Activated naive CD4-positive, alpha-beta T cell treated with anti-CD3 and anti-CD28 coated beads for 36 hours (primary cell): ENCODE measurements at regions of chr16 and their contacts with region 1.

Region 1: GRCh38 chr16:65117811-65118448 is 3.9 kb downstream of the CDH11 start:
- DNase-seq: peak; percentile 68
- H3K4me3 Mint-ChIP-seq: no peak overlapping the region
- H3K27ac Mint-ChIP-seq: no peak overlapping the region
- H3K4me1 Mint-ChIP-seq: peaks cover 2% of the 10 kb centered on the region
- H3K27me3 Mint-ChIP-seq: peaks cover 33% of the 10 kb centered on the region

Region 2: DNA sequence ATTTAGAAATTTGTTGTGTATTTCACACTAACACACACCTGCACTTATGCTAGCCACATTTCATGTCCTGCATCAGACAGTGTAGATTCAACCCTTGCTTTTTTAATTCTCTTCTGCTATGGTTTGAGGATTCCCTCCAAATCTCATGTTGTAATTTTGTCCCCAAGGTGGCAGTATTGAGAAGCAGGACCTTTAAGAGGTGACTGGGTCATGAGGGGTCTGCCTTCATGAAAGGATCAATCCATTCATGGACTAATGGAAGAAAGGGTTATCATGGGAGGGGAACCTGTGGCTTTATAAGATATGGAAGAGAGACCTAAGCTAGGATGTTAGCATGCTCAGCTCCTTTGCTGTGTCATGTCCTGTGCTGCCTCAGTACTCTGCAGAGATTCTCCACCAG is 1028.2 kb before region 1 on chr16:
- CTCF ChIA-PET with region 1: no interaction called
- intact Hi-C with region 1: loop called (anchors 5 kb)
- DNase-seq: no peak
- H3K4me3 Mint-ChIP-seq: no peak overlapping the region
- H3K27ac Mint-ChIP-seq: no peak overlapping the region
- H3K4me1 Mint-ChIP-seq: no peaks in the 10 kb centered on the region
- H3K27me3 Mint-ChIP-seq: no peaks in the 10 kb centered on the region

Region 3: GRCh38 chr16:65172356-65172755 is 54.4 kb after region 1 on chr16:
- CTCF ChIA-PET with region 1: no interaction called
- intact Hi-C with region 1: no loop called
- DNase-seq: no peak
- H3K4me3 Mint-ChIP-seq: no peak overlapping the region
- H3K27ac Mint-ChIP-seq: no peak overlapping the region
- H3K4me1 Mint-ChIP-seq: no peaks in the 10 kb centered on the region
- H3K27me3 Mint-ChIP-seq: no peaks in the 10 kb centered on the region

Region 4: GRCh38 chr16:65323655-65324237 is 205.8 kb after region 1 on chr16:
- CTCF ChIA-PET with region 1: no interaction called
- intact Hi-C with region 1: loop called (anchors 10 kb)
- DNase-seq: no peak
- H3K4me3 Mint-ChIP-seq: no peak overlapping the region
- H3K27ac Mint-ChIP-seq: no peak overlapping the region
- H3K4me1 Mint-ChIP-seq: no peaks in the 10 kb centered on the region
- H3K27me3 Mint-ChIP-seq: no peaks in the 10 kb centered on the region

Region 5: DNA sequence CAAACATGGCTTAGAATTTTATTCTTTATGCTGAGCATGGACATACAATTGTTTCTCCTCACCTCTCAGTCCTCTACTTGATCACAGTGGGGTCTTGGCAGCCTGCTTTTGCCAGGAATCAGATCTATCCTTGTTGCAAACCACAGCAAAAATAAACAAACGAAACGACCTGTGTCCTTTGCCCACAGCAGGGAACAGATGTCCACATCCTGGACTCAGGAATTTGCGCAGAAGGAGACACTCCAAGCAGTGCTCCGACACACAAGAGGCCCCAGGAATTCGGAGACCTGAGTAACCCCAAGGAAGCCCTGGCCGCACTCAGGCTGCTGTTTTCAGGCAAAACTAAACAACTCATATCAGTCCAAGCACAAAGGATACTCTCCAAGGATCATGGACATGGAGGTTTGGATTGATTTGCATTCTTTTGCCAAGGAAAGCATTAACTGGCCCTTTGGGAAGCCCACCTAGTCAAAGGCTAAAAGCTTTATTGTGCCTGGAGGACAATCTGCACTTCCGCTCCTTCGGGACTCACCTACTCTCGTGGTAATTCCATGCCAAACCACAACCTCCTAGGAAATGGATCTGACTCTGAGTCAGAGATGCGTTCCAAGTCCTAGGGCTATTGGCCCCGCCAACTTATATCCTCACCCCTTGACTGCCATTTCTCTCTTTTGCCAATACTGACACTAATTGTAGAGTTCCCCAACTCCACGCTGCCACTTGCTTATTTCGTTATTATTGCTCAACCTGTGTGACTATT is 275.1 kb after region 1 on chr16:
- CTCF ChIA-PET with region 1: no interaction called
- intact Hi-C with region 1: no loop called
- DNase-seq: no peak
- H3K4me3 Mint-ChIP-seq: no peak overlapping the region
- H3K27ac Mint-ChIP-seq: no peak overlapping the region
- H3K4me1 Mint-ChIP-seq: no peaks in the 10 kb centered on the region
- H3K27me3 Mint-ChIP-seq: no peaks in the 10 kb centered on the region

Region 6: DNA sequence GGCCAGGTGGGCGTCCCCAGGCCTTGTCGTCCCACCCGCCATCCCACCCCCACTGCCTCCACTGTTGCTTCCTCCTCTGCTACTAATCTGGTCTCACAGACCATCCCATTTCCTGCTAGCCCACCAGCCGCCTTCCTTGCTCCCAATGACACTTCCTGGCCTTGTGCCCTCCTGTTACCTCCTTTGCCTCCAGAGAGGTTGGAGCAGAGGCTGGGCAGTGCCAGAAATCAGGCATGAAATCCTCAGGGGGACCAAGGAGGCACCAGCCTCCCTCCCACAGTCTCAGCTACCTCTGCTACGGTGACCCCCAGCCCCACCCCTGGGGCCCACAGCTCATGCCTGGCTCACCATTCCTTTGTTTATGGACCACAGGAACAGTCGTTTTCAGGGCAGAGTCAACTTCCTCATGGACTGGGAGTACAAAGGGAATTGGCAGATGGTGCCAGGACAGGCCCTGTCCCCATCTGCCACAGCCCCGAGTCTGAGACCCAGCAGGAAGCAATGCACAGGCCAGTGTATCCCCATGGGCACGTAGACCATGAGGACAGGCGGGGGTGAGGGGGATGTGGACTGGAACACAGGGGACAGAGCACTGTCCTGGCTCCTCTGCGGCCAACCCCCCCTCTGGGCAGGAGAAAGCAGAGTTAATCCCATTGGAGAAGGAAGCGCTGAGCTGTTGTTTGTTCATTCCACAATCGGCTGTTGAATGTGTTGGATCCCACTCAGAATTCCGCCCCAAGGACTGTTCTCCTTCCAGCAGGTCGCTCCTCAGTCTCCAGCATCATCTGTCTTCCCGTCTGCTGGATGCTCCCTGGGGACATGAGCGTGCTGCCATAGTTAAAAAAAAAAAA is 1246.4 kb after region 1 on chr16:
- CTCF ChIA-PET with region 1: no interaction called
- intact Hi-C with region 1: no loop called
- DNase-seq: no peak
- H3K4me3 Mint-ChIP-seq: no peak overlapping the region
- H3K27ac Mint-ChIP-seq: no peak overlapping the region
- H3K4me1 Mint-ChIP-seq: peaks cover 2% of the 10 kb centered on the region
- H3K27me3 Mint-ChIP-seq: peaks cover 35% of the 10 kb centered on the region